GM13977 (cell line): ENCODE measurements at regions of chr1 and their contacts with region 1.

Region 1: DNA sequence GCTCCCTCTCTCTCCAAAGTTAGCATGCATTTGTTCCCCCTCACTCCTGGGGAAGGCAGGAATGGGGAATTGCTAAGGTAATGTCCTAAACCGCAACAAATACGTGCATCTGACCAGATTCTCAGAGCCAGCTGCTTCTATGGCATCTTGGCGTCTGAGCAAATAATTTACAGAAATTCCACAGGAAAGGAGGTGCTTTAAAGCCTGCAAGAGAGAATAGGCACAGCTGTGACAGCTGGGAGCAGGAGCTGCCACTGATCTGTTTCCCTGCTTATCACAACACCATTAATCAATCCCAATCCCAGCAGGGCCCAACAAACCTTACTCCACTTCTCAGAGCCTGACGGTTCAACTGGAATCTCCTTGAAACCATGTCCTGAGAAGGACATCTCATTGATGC is 83.5 kb upstream of the ZNF281 start:
- DNase-seq: no peak
- CTCF ChIP-seq: no peak

Region 2: GRCh38 chr1:199646761-199647160 is 846.6 kb before region 1 on chr1:
- in situ Hi-C with region 1: no loop called
- DNase-seq: no peak
- CTCF ChIP-seq: no peak

Region 3: GRCh38 chr1:200139661-200140250 is 353.6 kb before region 1 on chr1:
- in situ Hi-C with region 1: loop called (anchors 10 kb)
- DNase-seq: peak; percentile 58
- CTCF ChIP-seq: peak; percentile 68

Region 4: GRCh38 chr1:200279810-200280411 is 213.4 kb before region 1 on chr1:
- in situ Hi-C with region 1: loop called (anchors 10 kb)
- DNase-seq: peak; percentile 31
- CTCF ChIP-seq: peak; percentile 79